Psoas muscle (tissue), 8 donors: ENCODE measurements at regions of chr3 and their contacts with region 1.

Region 1: GRCh38 chr3:51718547-51719409 is 11.9 kb downstream of the GRM2 start:
- DNase-seq: peak; percentile 45 to 72
- ATAC-seq: peak; percentile 56 to 85 (median 83)
- H3K4me3 ChIP-seq: no peak overlapping the region
- H3K27ac ChIP-seq: no peak overlapping the region
- H3K4me1 ChIP-seq: no peaks in the 10 kb centered on the region
- H3K27me3 ChIP-seq: no peaks in the 10 kb centered on the region
- CTCF ChIP-seq: peak; percentile 59

Region 2: GRCh38 chr3:51799879-51800749 is 81.3 kb after region 1 on chr3:
- intact Hi-C with region 1: loop called in 1 of 2 experiments (anchors 5 kb)
- DNase-seq: no peak
- ATAC-seq: peak in 2 of 4 donors; percentile 40 to 67
- H3K4me3 ChIP-seq: no peak overlapping the region
- H3K27ac ChIP-seq: no peak overlapping the region
- H3K4me1 ChIP-seq: no peaks in the 10 kb centered on the region
- H3K27me3 ChIP-seq: no peaks in the 10 kb centered on the region
- CTCF ChIP-seq: peak; percentile 70

Region 3: GRCh38 chr3:51860703-51861665 is 142.2 kb after region 1 on chr3 and contains the start of gene IQCF2:
- intact Hi-C with region 1: no loop called
- DNase-seq: no peak
- ATAC-seq: no peak
- H3K4me3 ChIP-seq: no peak within 1 kb of the TSS
- H3K27ac ChIP-seq: no peak within 1 kb of the TSS
- H3K4me1 ChIP-seq: no peaks in the 10 kb centered on the region
- H3K27me3 ChIP-seq: peaks cover 0 to 3% (median 0%) of the 10 kb centered on the region in 3 donors
- CTCF ChIP-seq: no peak
- total RNA-seq, gene IQCF2: not detected